ENCODE measurements at regions of chr1 and their contacts with region 1.

Region 1: DNA sequence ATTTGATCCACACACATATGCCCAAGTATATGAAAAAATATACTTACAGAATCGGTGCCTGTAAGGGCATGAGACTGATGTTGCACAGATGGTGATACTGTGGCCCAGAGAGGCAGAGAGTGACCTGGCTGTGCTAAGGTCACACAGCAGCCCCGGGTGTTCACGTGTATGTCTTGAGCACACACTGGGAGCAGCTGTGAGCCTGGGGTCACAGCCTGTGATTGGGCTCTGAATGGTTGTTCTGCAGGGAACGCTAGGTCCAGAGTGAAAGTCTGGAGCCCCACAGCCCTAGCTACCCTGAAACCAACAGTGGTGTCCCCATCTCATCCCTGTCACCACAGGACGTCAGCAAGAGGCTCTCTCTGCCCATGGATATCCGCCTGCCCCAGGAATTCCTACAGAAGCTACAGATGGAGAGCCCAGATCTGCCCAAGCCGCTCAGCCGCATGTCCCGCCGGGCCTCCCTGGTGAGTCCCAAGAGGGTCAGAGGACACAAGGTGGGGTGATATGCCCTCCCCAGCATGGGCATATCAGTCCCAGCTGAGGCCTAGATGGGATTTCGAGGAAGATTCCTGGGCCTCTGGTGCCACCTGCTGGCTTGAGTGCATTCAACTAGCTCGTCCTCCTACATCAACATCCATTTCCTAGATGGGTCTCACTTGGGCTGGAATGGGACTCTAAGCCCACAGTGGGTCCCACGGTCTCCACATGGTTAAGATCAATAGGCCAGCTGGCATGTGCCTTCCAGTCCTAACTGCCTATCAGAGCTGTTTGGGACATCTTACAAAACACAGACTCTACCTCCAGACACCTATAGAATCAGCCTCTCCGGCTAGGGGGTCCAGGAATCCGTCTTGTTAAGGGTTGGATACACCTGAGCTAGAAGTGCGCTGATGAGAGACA is 19.7 kb downstream of the CDK18 start:
- DNase-seq: peak; percentile 26 to 83 (median 65)
- ATAC-seq: peak; percentile 46 to 62 (median 52)
- H3K4me3 ChIP-seq: no peak overlapping the region
- H3K4me3 Mint-ChIP-seq: no peak overlapping the region
- H3K27ac ChIP-seq: no peak overlapping the region
- H3K27ac Mint-ChIP-seq: no peak overlapping the region
- H3K4me1 ChIP-seq: peaks cover 0 to 6% of the 10 kb centered on the region in 2 experiments
- H3K4me1 Mint-ChIP-seq: no peaks in the 10 kb centered on the region
- H3K27me3 ChIP-seq: peaks cover 0 to 24% of the 10 kb centered on the region in 2 experiments
- H3K27me3 Mint-ChIP-seq: peaks cover 4 to 8% of the 10 kb centered on the region in 2 donors

Region 2: DNA sequence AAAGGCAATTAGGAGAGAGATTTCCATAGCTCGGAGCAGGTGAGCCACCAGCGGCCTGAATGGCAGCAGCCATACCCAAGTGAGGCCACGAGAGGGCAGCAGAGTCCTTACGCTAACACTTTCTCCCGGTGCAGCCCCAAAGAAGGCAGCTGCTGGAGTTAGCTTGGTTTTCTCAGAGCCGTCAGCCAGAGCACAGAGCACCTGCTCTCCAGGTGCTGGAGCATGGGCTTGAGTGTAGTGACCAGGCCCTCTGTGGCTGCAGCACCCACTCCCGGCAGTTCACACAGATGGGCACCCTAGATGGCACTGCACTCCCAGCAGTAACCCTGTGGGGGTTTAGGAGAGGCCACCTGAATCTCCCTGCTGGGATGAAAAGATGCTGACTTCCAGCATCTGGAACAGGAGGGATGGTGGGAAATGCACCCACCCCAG is 250.6 kb before region 1 on chr1:
- CTCF ChIA-PET with region 1: interaction called, 3 to 21 read pairs
- POLR2A ChIA-PET with region 1: no interaction called
- DNase-seq: peak; percentile 66 to 92 (median 83)
- ATAC-seq: peak; percentile 74 to 84 (median 77)
- H3K4me3 ChIP-seq: peak overlapping the region in 1 of 2 donors; percentile 12
- H3K4me3 Mint-ChIP-seq: peak overlapping the region; percentile 39 to 65 (median 53)
- H3K27ac ChIP-seq: no peak overlapping the region
- H3K27ac Mint-ChIP-seq: peak overlapping the region; percentile 78 to 86
- H3K4me1 ChIP-seq: peaks cover 28 to 49% of the 10 kb centered on the region in 2 experiments
- H3K4me1 Mint-ChIP-seq: peaks cover 45 to 47% (median 47%) of the 10 kb centered on the region in 3 donors
- H3K27me3 ChIP-seq: peaks cover 0 to 12% of the 10 kb centered on the region in 2 experiments
- H3K27me3 Mint-ChIP-seq: no peaks in the 10 kb centered on the region

Region 3: DNA sequence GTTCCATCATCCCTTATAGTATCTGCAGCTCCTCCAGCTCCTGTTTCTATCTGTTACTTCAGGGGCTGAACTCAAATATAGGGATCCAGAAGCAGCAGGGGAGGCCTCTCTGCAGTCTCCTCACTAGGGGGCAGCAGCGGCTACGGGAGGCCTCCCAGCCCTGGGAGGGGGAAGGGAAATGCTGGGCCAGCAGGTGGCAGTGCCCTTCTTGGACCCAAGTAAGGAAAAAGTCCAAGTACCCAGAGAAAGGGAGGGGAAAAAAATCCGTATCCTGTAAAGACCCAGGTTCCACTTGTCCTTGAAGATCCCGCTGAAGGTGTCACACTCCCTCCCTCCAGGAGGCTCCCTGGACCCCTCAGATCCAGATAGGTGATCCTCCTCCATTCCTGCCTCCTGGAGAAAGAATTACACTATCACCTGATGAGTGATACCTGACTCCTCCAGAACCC is 188.5 kb before region 1 on chr1:
- CTCF ChIA-PET with region 1: interaction called in 1 of 2 experiments, 14 read pairs
- POLR2A ChIA-PET with region 1: no interaction called
- DNase-seq: peak; percentile 36 to 85 (median 69)
- ATAC-seq: peak; percentile 86 to 98 (median 94)
- H3K4me3 ChIP-seq: no peak overlapping the region
- H3K4me3 Mint-ChIP-seq: no peak overlapping the region
- H3K27ac ChIP-seq: no peak overlapping the region
- H3K27ac Mint-ChIP-seq: no peak overlapping the region
- H3K4me1 ChIP-seq: peaks cover 0 to 3% of the 10 kb centered on the region in 2 experiments
- H3K4me1 Mint-ChIP-seq: peaks cover 0 to 2% (median 0%) of the 10 kb centered on the region in 3 donors
- H3K27me3 ChIP-seq: peaks cover 0 to 8% of the 10 kb centered on the region in 2 experiments
- H3K27me3 Mint-ChIP-seq: peaks cover 2 to 3% of the 10 kb centered on the region in 2 donors

Region 4: DNA sequence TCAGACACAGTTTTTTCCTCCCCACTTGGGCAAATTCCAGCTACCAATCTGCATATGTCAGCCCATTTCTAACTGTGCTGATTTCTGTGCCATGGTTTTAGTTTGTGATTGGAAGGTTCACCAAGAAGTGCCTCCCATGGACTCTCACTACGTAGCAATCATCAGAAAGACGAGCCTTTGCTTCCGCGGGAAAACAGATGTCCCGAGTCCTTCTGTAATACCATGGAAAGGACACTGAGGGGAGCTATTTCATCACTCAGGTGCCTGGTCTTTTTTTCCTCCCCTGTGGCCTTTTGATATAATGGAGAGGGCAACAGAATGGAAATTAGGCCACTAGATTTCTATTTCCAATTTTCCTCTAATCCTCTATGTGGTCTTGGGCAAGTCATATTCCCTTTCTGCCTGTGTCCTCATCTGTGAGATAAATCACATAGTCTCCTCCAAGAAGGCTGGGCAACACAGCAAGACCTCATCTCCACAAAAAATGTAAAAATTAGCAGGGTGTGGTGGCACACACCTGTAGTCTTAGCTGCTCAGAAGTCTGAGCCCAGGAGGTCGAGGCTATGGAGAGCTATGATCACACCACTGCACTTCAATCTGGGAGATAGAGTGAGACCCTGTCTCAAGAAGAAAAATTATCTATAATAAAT is 127.0 kb before region 1 on chr1:
- CTCF ChIA-PET with region 1: interaction called, 5 to 25 read pairs
- POLR2A ChIA-PET with region 1: no interaction called
- DNase-seq: peak in 13 of 35 experiments; percentile 1 to 66 (median 10)
- ATAC-seq: peak in 2 of 4 experiments; percentile 45 to 55
- H3K4me3 ChIP-seq: no peak overlapping the region
- H3K4me3 Mint-ChIP-seq: no peak overlapping the region
- H3K27ac ChIP-seq: no peak overlapping the region
- H3K27ac Mint-ChIP-seq: no peak overlapping the region
- H3K4me1 ChIP-seq: no peaks in the 10 kb centered on the region
- H3K4me1 Mint-ChIP-seq: peaks cover 0 to 5% (median 5%) of the 10 kb centered on the region in 3 donors
- H3K27me3 ChIP-seq: peaks cover 5 to 7% of the 10 kb centered on the region in 2 experiments
- H3K27me3 Mint-ChIP-seq: peaks cover 5 to 19% of the 10 kb centered on the region in 2 donors

Region 5: DNA sequence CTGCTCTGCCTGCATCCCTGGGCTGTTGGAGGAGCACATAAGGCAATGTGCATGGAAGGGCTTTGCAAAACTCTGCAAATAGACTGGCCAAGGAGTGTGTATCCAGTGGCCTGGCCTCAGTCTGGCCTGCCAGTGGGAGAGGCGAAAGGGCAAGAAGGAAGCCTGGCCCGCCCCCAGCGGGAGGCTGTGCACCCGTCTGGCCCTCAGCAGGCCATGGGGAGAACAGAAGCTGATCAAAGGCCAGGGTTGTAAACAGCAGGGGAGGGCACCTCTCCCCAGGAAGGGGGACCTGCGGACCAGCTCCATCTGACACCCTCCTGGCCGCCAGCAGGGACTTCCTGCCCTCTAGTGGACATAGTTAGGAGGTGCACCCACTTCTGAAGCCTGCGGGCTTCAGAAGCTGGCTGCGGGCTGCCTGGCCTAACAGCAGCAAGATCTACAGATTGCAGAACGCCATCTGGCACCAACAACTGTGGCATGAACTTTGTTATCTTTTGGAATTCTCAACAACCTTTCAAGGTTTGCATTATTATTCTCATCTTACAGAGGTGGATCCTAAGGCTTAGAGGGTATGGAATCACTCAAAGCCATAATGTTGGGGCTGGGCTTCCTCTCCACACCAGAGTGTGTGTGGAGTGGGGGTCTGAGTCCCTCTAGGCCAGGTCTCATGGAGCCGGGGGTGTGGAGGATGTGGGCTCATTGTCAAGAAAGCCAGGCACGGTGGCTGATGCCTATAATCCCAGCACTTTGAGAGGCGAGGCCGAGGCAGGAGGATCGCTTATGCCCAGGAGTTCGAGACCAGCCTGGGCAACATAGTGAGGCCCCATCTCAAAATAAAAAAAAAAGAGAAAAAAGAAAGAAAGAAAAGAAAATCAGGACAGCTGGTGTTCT is 38.6 kb before region 1 on chr1:
- CTCF ChIA-PET with region 1: interaction called, 22 to 27 read pairs
- POLR2A ChIA-PET with region 1: interaction called in 1 of 2 experiments, 3 read pairs
- DNase-seq: peak; percentile 42 to 85 (median 60)
- ATAC-seq: peak; percentile 60 to 81 (median 70)
- H3K4me3 ChIP-seq: no peak overlapping the region
- H3K4me3 Mint-ChIP-seq: no peak overlapping the region
- H3K27ac ChIP-seq: no peak overlapping the region
- H3K27ac Mint-ChIP-seq: no peak overlapping the region
- H3K4me1 ChIP-seq: peaks cover 0 to 31% of the 10 kb centered on the region in 2 experiments
- H3K4me1 Mint-ChIP-seq: peaks cover 21 to 34% (median 29%) of the 10 kb centered on the region in 3 donors
- H3K27me3 ChIP-seq: peaks cover 2 to 52% of the 10 kb centered on the region in 2 experiments
- H3K27me3 Mint-ChIP-seq: peaks cover 40 to 50% of the 10 kb centered on the region in 2 donors

Region 6: GRCh38 chr1:205535866-205536758 is 12.0 kb after region 1 on chr1:
- CTCF ChIA-PET with region 1: interaction called, 3 to 14 read pairs
- POLR2A ChIA-PET with region 1: no interaction called
- DNase-seq: no peak
- ATAC-seq: no peak
- H3K4me3 ChIP-seq: no peak overlapping the region
- H3K4me3 Mint-ChIP-seq: no peak overlapping the region
- H3K27ac ChIP-seq: no peak overlapping the region
- H3K27ac Mint-ChIP-seq: peak overlapping the region in 1 of 2 donors; percentile 45
- H3K4me1 ChIP-seq: no peaks in the 10 kb centered on the region
- H3K4me1 Mint-ChIP-seq: peaks cover 0 to 8% (median 8%) of the 10 kb centered on the region in 3 donors
- H3K27me3 ChIP-seq: peaks cover 0 to 38% of the 10 kb centered on the region in 2 experiments
- H3K27me3 Mint-ChIP-seq: peaks cover 15 to 37% of the 10 kb centered on the region in 2 donors